Cardiac septum (tissue), 1 donor: ENCODE measurements at regions of chr3 and their contacts with region 1.

Region 1: DNA sequence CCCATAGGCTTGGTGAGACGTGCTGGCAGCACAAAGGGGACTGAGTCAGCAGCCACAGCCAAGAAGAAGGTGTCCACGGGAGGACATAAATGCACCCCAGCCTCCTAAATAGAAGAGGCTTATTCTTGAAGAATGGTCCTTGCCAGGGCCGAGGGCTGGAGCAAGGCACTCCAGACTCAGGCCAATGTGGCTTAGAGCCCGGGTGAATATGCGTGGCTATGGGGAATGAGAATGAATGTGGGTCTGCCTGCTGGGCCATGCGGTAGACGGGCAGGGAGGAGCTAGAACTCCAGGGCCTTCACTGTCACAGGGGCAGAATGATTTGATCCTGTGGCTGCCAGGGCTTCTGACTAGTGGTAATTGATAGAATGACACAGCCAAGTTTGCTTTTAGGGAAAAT is 34.0 kb downstream of the DHX30 start:
- DNase-seq: no peak

Region 2: GRCh38 chr3:47688488-47688887 is 148.5 kb before region 1 on chr3:
- intact Hi-C with region 1: no loop called
- DNase-seq: no peak

Region 3: DNA sequence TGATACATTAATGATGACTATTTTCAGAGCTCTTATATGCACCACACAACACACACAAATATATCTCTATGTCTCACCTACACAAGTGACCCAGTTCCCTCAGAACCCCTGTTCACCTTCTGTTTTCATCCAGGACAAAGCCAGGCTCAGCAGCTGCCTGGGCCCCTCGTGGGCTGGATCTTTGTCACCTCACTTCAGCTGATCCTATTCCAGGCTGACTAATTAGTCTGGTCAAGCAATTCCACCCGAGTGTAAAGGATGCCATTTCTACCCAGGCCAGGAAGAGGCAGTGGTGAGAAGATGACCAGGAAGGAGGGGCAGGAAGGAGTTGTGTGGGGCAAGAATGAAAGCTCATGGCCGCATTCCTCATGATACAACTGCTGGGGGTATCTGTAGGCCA is 28.2 kb after region 1 on chr3:
- intact Hi-C with region 1: no loop called
- DNase-seq: no peak

Region 4: DNA sequence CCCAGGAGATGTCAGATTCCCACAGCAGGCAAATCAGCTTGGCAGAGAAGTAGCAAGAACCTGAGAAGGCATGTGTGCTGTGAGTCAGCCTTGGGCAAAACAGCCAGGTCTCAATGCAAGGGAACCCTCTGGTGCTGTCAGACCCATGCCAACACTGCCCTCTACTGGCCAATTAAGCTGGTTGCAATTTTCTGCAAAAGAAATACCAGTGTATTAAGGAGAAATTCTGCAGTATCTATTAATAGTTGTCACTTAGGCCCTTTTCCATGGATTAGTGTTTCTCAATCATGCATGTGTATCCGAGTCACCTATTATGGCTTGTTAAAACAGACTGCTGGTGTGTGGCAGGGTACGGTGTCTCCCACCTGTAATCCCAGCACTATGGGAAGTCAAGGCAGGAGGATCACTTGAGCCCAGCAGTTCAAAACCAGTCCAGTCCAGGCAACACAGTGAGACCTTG is 153.0 kb after region 1 on chr3:
- intact Hi-C with region 1: loop called (anchors 5 kb)
- DNase-seq: peak; percentile 78

Region 5: GRCh38 chr3:48157950-48158376 is 321.0 kb after region 1 on chr3:
- intact Hi-C with region 1: loop called (anchors 2 kb)
- DNase-seq: no peak